ENCODE measurements at regions of chr16 and their contacts with region 1.

Region 1: DNA sequence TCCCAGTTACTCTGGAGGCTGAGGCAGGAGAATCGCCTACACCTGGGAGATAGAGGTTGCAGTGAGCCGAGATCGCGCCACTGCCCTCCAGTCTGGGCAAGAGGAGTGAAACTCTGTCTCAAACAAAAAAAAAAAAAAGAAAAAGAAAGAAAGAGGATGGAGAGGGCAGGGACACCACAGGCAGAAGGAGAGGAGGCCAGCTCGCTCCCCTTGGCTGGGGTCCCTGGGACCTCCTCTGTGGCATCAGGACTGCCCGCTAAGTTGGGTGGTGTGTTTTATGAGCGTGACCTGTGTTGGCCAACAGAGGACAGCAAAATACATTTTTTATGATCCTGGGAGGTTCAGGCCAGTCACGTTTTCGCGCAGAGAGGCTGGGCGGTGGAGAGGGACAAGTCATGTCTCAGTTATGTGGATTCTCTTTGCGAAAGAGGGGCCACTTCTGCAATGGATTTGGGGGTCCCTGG is 229.6 kb downstream of the MRTFB start:
- DNase-seq: peak; percentile 82
- ATAC-seq: peak; percentile 74
- H3K4me3 ChIP-seq: peak overlapping the region in 1 of 2 experiments; percentile 77; a peak in 2 of 4 replicates
- H3K27ac ChIP-seq: peak overlapping the region; percentile 87; the same call in 1 of the 2 replicates
- H3K4me1 ChIP-seq: peaks cover 14% of the 10 kb centered on the region
- H3K27me3 ChIP-seq: no peaks in the 10 kb centered on the region
- CTCF ChIP-seq: peak; percentile 92

Region 2: GRCh38 chr16:13957197-13958078 is 343.3 kb before region 1 on chr16:
- CTCF ChIA-PET with region 1: no interaction called
- POLR2A ChIA-PET with region 1: no interaction called
- in situ Hi-C with region 1: no loop called
- intact Hi-C with region 1: no loop called
- DNase-seq: peak; percentile 77
- ATAC-seq: peak; percentile 95
- H3K4me3 ChIP-seq: peak overlapping the region; percentile 33 to 63
- H3K27ac ChIP-seq: peak overlapping the region; percentile 95
- H3K4me1 ChIP-seq: peaks cover 41% of the 10 kb centered on the region
- H3K27me3 ChIP-seq: no peaks in the 10 kb centered on the region
- CTCF ChIP-seq: no peak

Region 3: GRCh38 chr16:14278749-14279148 is 22.0 kb before region 1 on chr16:
- CTCF ChIA-PET with region 1: no interaction called
- POLR2A ChIA-PET with region 1: interaction called, 13 read pairs
- in situ Hi-C with region 1: no loop called
- intact Hi-C with region 1: no loop called
- DNase-seq: no peak
- ATAC-seq: no peak
- H3K4me3 ChIP-seq: no peak overlapping the region
- H3K27ac ChIP-seq: no peak overlapping the region
- H3K4me1 ChIP-seq: no peaks in the 10 kb centered on the region
- H3K27me3 ChIP-seq: no peaks in the 10 kb centered on the region
- CTCF ChIP-seq: no peak

Region 4: GRCh38 chr16:14444975-14445810 is 144.5 kb after region 1 on chr16:
- CTCF ChIA-PET with region 1: interaction called, 11 read pairs
- POLR2A ChIA-PET with region 1: no interaction called
- in situ Hi-C with region 1: no loop called
- intact Hi-C with region 1: no loop called
- DNase-seq: no peak
- ATAC-seq: no peak
- H3K4me3 ChIP-seq: no peak overlapping the region
- H3K27ac ChIP-seq: no peak overlapping the region
- H3K4me1 ChIP-seq: no peaks in the 10 kb centered on the region
- H3K27me3 ChIP-seq: no peaks in the 10 kb centered on the region
- CTCF ChIP-seq: no peak

Region 5: DNA sequence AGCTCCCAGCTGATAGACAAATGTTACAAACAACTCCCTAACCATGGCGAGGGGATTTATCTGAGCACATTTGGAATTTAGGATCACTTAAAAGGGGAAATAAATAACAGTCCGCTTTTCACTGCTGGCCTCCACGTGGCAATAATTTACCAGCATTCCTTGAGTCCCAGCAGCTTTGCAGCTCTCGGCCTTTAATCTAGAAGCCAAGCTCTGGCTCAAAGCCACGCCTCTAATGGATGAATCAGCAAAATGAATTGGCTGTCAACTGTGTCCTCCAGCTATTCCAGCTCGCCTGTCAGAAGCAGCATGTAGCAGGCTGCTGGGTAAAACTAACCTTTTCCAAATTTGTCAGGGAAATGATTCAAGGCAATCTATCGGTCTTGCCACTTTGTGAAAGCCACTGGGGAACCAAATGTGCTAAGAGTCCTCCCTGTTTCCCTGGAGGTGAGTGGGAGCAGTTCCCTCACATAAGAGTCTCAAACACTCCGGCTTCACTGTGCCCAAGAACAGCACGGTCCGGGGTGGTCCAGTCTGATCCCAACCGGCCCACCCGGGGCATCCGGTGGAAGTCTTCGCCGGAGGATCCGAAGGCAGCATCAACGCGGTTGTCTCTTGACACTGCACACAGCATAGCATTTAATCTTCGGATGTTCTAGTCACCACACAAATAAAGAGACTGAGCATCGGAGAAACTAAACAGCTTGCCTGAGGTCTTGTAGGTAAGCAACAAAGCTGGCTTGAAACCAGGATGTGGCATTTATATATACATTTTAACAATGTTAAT is 186.0 kb after region 1 on chr16:
- CTCF ChIA-PET with region 1: no interaction called
- POLR2A ChIA-PET with region 1: interaction called, 5 read pairs
- in situ Hi-C with region 1: no loop called
- intact Hi-C with region 1: loop called (anchors 5 kb)
- DNase-seq: no peak
- ATAC-seq: peak; percentile 92
- H3K4me3 ChIP-seq: peak overlapping the region in 1 of 2 experiments; percentile 28; a peak in 2 of 4 replicates
- H3K27ac ChIP-seq: peak overlapping the region; percentile 57
- H3K4me1 ChIP-seq: peaks cover 21% of the 10 kb centered on the region
- H3K27me3 ChIP-seq: no peaks in the 10 kb centered on the region
- CTCF ChIP-seq: no peak

Region 6: DNA sequence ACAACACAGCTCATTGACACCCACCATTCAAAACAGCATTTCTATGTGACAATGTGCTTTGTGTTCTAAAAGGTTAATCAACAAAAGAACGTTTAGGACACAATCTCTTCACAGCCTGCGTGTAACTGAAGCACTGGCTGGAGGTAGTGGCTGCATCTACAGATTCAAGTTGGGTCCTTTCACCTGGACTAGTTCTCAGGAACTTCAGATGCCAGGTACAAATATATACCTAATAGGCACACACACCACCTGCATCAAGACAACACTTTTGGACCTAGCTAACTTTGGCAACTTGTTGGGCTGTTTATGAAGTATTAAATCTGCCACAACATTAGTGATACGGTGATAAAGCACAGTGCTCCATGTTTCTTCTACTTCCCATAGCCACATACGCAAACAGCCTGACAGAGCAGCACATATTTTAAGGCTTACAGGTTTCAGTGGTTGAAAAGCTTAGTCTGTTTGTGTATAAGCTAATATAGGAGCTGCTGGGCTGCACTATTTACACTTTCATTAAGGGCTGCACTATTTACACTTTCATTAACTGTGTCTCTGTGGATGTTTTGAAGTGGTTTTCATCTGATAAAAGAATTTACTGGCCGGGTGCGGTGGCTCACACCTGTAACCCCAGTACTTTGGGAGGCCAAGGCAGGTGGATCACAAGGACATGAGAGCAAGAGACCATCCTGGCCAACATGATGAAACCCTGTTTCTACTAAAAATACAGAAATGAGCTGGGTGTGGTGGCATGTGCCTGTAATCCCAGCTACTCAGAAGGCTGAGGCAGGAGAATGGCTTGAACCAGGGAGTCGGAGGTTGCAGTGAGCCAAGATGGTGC is 196.7 kb after region 1 on chr16:
- CTCF ChIA-PET with region 1: no interaction called
- POLR2A ChIA-PET with region 1: interaction called, 10 read pairs
- in situ Hi-C with region 1: no loop called
- intact Hi-C with region 1: no loop called
- DNase-seq: no peak
- ATAC-seq: no peak
- H3K4me3 ChIP-seq: no peak overlapping the region
- H3K27ac ChIP-seq: no peak overlapping the region
- H3K4me1 ChIP-seq: peaks cover 18% of the 10 kb centered on the region
- H3K27me3 ChIP-seq: no peaks in the 10 kb centered on the region
- CTCF ChIP-seq: no peak

Region 7: GRCh38 chr16:14529010-14529669 is 228.4 kb after region 1 on chr16:
- CTCF ChIA-PET with region 1: interaction called, 5 read pairs
- POLR2A ChIA-PET with region 1: interaction called, 4 read pairs
- in situ Hi-C with region 1: no loop called
- intact Hi-C with region 1: loop called (anchors 2 kb)
- DNase-seq: peak; percentile 87
- ATAC-seq: peak; percentile 91
- H3K4me3 ChIP-seq: no peak overlapping the region
- H3K27ac ChIP-seq: peak overlapping the region; percentile 72
- H3K4me1 ChIP-seq: peaks cover 8% of the 10 kb centered on the region
- H3K27me3 ChIP-seq: no peaks in the 10 kb centered on the region
- CTCF ChIP-seq: peak; percentile 87

Region 8: DNA sequence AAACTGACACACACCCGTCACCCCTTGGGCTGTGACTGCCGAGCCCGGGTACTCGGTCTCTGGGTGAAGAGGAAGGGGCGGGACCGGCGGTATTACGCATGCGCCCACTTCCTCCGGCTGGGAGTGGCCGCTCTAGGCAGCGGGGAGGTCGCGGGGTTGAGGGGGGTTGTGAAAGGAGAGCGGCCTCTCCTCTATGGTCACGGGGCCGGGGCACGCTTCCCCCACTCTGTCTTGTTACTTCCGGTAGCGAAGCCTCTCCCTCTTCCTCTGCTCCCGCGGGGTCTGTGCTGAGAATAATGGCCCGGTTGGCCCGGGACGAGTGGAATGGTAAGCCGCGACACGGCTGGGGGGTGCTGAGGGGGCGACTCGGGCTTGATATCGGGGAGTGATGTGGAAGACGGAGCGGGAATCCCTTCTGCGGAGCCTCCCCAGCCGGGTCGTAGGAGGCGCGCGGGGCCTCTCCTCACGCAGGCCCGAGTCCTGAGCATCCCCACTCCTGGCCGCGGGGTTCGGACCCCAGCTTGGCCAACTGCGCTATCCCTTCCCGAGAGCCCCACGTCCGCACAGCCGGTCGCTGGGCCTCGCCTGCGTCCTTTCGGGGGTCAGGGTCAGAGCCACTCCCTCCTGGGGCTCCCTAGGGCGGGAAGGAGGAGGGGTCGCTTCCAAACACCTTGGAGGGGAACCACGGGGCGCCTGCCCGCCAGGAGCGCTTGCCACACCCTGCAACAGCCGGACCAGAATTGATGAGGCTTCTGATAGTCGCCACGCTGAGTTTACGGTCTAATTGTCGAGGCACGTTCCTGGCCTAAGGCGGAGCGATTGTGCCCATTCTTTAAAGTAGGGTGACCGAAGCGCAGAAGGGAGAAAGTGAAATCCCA is 332.2 kb after region 1 on chr16 and contains the start of gene BFAR:
- CTCF ChIA-PET with region 1: no interaction called
- POLR2A ChIA-PET with region 1: no interaction called
- in situ Hi-C with region 1: no loop called
- intact Hi-C with region 1: loop called (anchors 5 kb)
- DNase-seq: peak; percentile 94
- ATAC-seq: peak; percentile 90
- H3K4me3 ChIP-seq: peak within 1 kb of the TSS; percentile 88 to 99
- H3K27ac ChIP-seq: peak within 1 kb of the TSS; percentile 99
- H3K4me1 ChIP-seq: peaks cover 46% of the 10 kb centered on the region
- H3K27me3 ChIP-seq: no peaks in the 10 kb centered on the region
- CTCF ChIP-seq: no peak
- total RNA-seq, gene BFAR: 114 TPM

Measured in Panc1 (cell line).